OCI-LY7 (cell line): ENCODE measurements at regions of chr20 and their contacts with region 1.

Region 1: GRCh38 chr20:33666293-33667244 is at the start of gene ACTL10:
- DNase-seq: peak; percentile 94
- H3K4me3 ChIP-seq: peak within 1 kb of the TSS; percentile 77
- H3K27ac ChIP-seq: peak within 1 kb of the TSS; percentile 79
- H3K4me1 ChIP-seq: peaks cover 64% of the 10 kb centered on the region
- CTCF ChIP-seq: no peak
- total RNA-seq, gene ACTL10: 7.4 and 11.7 TPM in 2 replicates

Region 2: DNA sequence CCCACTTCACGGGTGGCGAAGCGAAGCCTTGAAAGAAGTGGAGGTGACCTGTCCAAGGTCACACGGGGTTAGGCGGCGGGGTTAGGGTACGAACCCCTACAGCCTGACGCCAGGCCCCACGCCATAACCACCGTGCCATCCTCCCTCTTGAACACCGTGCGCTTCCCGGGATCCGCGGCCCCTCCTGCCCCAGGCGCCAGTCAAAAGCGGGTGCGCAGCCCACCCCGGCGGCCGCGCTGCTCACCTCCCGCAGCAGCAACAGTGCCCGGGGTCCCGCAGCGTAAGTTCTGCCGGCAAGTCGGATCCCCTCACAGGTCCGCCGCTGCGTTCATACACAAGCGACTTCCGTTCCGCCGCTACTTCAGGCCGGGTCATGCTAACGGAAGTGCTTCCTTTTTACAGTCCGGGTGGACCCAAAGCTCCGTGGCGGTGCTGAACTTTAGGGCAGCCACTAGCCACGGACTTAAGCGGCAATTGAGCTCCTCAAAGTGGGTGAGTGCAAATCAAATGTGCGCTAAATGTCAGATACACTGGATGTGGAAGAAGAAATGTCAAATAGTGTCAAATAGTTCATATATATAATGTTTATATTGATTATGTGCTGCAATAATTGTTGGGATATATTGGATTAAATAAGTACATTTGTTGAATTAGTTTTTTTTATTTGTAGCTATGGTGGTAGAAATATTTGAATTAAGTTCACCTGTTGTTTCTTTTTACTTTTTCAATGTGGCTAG is 265.2 kb before region 1 on chr20 and contains the start of gene CDK5RAP1:
- CTCF ChIA-PET with region 1: no interaction called
- POLR2A ChIA-PET with region 1: no interaction called
- intact Hi-C with region 1: loop called (anchors 5 kb)
- DNase-seq: peak; percentile 96
- H3K4me3 ChIP-seq: peak within 1 kb of the TSS; percentile 94
- H3K27ac ChIP-seq: peak within 1 kb of the TSS; percentile 65
- H3K4me1 ChIP-seq: peaks cover 32% of the 10 kb centered on the region
- CTCF ChIP-seq: 0 out of 2 replicates have a peak, but pooled peaks have one; percentile 8
- total RNA-seq, gene CDK5RAP1: 32.1 and 41.2 TPM in 2 replicates

Region 3: DNA sequence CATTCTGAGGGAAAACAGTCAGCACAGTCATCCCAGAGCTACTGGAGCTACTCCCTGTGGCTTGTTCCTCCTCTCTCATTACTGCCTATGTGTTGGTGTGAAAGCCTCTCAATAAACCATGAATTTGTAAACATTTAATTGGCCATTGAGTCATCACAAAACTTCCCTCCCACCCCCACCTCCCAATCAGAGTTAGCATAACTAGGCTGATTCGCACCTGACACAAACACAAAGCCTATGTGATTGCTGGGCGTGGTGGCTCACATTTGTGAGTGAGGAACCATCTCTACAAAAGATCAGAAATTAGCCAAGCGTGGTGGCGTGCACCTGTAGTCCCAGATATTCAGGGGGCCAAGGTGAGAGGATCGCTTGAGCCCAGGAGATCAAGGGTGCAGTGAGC is 205.9 kb before region 1 on chr20:
- CTCF ChIA-PET with region 1: interaction called, 4 read pairs
- POLR2A ChIA-PET with region 1: no interaction called
- intact Hi-C with region 1: loop called (anchors 1 kb)
- DNase-seq: peak; percentile 80
- H3K4me3 ChIP-seq: no peak overlapping the region
- H3K27ac ChIP-seq: peak overlapping the region; percentile 59
- H3K4me1 ChIP-seq: peaks cover 31% of the 10 kb centered on the region
- CTCF ChIP-seq: no peak

Region 4: DNA sequence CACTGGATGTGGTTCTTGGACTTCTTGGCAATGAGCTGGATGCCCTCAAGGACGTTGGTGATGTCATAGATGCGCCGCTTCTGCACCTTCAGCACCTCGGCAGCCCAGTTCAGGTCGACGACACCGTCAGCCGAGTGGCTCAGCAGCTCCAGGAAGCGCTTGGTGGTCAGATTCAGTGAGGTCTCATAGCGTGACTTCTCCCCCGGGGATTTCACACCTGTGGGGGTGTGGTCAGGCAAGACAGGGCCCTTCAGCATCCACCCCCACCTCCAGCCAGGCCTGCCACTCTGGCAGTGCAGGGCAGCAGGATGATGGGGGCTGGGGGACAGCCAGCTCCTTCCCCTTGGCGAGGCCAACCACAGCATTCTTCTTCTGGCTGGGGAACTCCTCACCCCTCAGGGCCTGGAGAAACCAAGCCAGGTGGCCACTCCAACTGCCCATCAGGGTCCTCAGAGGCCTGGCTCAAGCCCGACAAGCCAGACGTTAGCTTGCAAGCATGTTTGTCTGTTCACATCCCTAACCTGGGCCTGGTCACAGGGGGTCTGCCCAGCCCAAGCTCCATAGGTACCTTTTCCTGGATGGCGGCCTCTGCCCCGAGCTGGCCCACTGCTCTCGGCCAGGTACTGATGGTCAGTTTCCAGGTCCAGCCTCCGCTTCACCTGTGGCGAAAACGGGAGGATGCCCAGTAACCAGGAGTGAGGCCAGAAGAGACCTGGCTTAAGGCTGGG is 13.4 kb after region 1 on chr20:
- CTCF ChIA-PET with region 1: interaction called, 16 read pairs
- POLR2A ChIA-PET with region 1: interaction called, 8 read pairs
- intact Hi-C with region 1: loop called (anchors 1 kb)
- DNase-seq: peak; percentile 96
- H3K4me3 ChIP-seq: peak overlapping the region; percentile 48
- H3K27ac ChIP-seq: peak overlapping the region; percentile 78
- H3K4me1 ChIP-seq: peaks cover 70% of the 10 kb centered on the region
- CTCF ChIP-seq: no peak

Region 5: DNA sequence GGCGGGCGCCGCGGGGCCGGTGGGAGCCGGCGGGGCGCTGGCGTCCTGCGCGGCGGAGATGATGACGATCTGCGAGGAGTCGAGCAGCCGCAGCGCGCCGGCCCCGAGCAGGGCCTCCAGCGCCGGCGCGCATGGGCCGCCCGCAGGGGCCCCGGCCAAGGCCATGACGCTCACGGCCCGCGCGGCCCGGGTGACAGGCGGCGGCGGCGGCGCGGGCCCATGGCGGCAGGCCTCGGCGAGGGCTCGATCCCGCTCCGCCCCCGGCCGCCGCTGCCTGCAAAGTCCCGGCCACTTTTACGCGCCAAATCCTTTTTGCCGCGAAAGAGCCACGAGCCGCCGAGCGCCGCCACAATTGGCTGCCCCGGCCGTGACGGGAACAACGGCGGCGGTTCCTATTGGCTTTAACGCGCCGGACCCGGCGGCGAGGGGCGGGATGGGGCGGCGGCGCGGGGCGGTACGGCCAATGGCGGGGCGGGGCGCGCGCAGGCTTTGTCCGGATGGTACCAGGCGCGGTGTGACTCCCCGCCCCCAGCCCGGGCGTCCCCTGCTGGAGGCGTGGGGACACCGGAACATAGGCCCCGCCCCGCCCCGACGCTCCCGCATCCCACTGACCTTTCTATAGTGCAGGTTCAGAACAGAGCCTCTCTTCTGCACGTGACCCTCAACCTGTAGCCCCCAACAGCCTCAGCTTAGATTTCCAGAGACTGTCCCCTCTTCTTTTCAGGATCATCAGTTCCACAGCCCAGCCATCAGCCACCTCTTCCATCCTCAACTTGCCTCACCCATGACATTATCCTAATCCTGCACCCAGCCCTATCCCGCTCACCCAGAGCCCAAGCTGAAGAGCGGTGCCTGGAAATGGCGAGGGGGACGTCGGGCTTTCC is 19.8 kb after region 1 on chr20 and contains the start of gene E2F1:
- CTCF ChIA-PET with region 1: interaction called, 16 read pairs
- POLR2A ChIA-PET with region 1: interaction called, 5 read pairs
- intact Hi-C with region 1: loop called (anchors 1 kb)
- DNase-seq: peak; percentile 97
- H3K4me3 ChIP-seq: peak within 1 kb of the TSS; percentile 90
- H3K27ac ChIP-seq: peak within 1 kb of the TSS; percentile 94
- H3K4me1 ChIP-seq: peaks cover 71% of the 10 kb centered on the region
- CTCF ChIP-seq: 0 out of 2 replicates have a peak, but pooled peaks have one; percentile 50
- total RNA-seq, gene E2F1: 128 and 135 TPM in 2 replicates